ENCODE measurements at regions of chr4 and their contacts with region 1.

Region 1: DNA sequence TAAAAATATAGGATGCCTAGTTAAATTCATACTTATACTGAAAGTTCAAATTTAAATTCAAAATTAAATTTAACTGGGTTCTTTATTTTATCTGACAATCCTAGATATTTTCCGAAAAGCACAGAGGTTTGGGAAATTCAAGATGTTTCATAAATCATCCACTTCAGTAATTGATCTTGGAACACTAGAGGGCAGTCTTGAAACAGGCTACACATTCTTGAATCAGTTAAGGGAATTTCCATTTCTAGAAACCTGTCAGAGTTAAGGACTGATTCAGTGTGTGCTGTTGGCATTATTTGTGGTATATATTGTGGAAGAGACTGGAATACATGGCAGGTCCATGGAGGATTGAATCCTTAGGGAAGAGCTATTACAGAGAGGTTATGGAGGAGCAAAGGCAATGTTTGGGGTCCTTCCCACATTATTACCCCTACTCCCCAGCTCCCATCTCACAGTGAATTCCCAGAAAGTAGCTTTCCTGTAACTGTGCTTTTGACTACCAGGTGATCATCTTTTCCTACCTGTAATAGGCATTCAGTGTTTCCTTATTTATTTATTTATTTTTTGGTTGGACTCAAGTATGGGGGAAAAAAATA is 92.9 kb downstream of the EGF start:
- DNase-seq: peak; percentile 19 to 75
- H3K4me3 ChIP-seq: no peak overlapping the region
- H3K4me1 ChIP-seq: peaks cover 6% of the 10 kb centered on the region
- H3K27me3 ChIP-seq: no peaks in the 10 kb centered on the region

Region 2: GRCh38 chr4:110310795-110311194 is 305.2 kb after region 1 on chr4:
- in situ Hi-C with region 1: loop called (anchors 10 kb)
- DNase-seq: no peak
- H3K4me3 ChIP-seq: no peak overlapping the region
- H3K4me1 ChIP-seq: peaks cover 7% of the 10 kb centered on the region; the same call in 1 of the 2 replicates
- H3K27me3 ChIP-seq: no peaks in the 10 kb centered on the region

Region 3: DNA sequence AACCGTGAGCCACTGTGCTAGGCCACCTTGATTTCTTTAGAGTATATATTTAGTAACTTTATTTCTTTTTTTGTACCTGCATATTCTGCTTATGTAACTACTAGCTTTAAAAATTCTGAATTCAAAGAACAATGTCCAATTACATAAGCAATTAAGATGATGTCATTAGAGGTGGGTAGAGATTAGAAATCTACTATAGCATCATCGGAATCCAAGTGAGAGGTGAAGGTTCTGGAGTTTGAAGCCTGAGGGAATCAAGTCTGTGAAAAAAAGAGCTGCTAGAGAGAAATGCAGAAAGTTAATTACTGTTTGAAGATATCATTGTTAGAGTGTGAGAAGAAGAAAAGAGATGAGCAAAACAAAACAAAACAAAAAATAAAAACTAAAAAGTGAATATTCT is 391.4 kb after region 1 on chr4:
- in situ Hi-C with region 1: no loop called
- DNase-seq: no peak
- H3K4me3 ChIP-seq: no peak overlapping the region
- H3K4me1 ChIP-seq: peaks cover 17% of the 10 kb centered on the region
- H3K27me3 ChIP-seq: peaks cover 14% of the 10 kb centered on the region

Region 4: GRCh38 chr4:110516106-110516922 is 510.8 kb after region 1 on chr4:
- in situ Hi-C with region 1: loop called (anchors 5 kb)
- DNase-seq: peak; percentile 83 to 89
- H3K4me3 ChIP-seq: peak overlapping the region; percentile 28
- H3K4me1 ChIP-seq: peaks cover 2% of the 10 kb centered on the region; the same call in 1 of the 2 replicates
- H3K27me3 ChIP-seq: no peaks in the 10 kb centered on the region